ENCODE measurements at regions of chr7 and their contacts with region 1.

Region 1: DNA sequence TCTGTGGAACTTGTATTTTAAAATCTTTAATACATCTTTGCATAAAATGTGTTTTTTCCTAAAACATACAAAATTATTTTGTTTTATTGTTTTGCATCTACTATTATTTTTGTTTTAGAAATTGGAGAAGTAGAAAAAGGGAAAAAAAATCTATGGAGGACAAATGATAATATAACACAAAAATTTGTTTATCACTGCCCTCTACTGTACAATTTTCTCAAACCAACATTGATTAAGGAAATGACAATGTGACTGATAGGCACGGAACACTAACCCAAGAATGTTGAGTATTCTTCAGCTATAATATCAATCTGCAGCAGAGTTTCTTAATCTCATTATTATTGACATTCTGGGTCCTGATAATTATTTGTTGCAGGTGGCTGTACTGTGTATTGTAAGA is 9.5 kb upstream of the ING3 start:
- DNase-seq: no peak
- H3K4me3 ChIP-seq: no peak overlapping the region
- H3K27ac ChIP-seq: no peak overlapping the region
- H3K4me1 ChIP-seq: no peaks in the 10 kb centered on the region
- H3K27me3 ChIP-seq: no peaks in the 10 kb centered on the region
- CTCF ChIP-seq: peak in 1 of 3 donors; percentile 24
- POLR2A ChIP-seq: no peak

Region 2: GRCh38 chr7:120272261-120272660 is 668.8 kb before region 1 on chr7:
- intact Hi-C with region 1: loop called (anchors 5 kb)
- DNase-seq: no peak
- H3K4me3 ChIP-seq: peak overlapping the region; percentile 48 to 69 (median 58)
- H3K27ac ChIP-seq: no peak overlapping the region
- H3K4me1 ChIP-seq: no peaks in the 10 kb centered on the region
- H3K27me3 ChIP-seq: no peaks in the 10 kb centered on the region
- CTCF ChIP-seq: peak; percentile 35 to 48 (median 36)
- POLR2A ChIP-seq: no peak

Region 3: DNA sequence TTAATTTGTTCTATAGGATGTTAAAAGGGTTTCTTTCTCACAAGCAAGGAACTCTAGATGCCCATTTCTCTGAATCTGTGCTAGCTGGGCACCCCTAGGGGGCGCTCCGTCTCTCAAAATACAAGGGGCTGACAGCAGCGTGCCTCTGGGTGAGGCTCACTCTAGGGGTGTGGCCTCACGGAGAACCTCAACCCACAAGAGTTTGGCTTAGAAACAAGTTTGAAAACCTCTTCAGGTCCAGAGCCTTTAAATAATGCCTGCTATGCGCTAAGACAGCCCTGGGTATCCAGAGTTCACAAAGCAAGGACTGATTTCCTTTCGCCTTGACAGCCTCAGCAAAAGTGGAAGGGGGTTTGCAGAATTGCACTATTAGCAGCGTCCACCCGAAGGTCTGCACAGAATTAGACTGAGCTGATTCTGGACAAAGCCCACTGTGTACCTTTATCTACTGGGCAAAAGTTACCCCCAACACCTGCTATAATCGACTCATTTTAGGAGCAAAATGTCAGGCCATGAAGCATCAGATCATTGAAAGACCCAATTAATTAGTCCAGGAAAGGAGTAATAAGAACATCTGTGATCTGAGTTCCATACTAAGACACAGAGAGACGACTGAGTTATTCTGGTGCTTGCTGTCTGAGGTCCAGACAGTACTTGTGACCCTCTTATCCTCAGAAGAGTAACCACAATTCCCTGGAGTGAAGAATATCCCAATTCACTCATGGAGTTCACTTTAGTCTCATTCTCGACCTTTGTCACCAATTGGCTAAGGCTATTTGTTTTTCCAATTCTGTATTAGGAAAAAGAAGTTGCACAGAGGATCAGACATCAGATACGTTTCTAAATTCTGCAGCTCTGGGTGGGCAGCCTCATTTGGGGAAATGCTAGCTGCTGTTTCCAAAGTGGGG is 46.9 kb after region 1 on chr7:
- intact Hi-C with region 1: loop called (anchors 2 kb)
- DNase-seq: peak; percentile 78 to 80
- H3K4me3 ChIP-seq: peak overlapping the region; percentile 51 to 65 (median 53)
- H3K27ac ChIP-seq: peak overlapping the region; percentile 77 to 90
- H3K4me1 ChIP-seq: no peaks in the 10 kb centered on the region
- H3K27me3 ChIP-seq: peaks cover 0 to 7% of the 10 kb centered on the region in 2 donors
- CTCF ChIP-seq: peak; percentile 64 to 89 (median 74)
- POLR2A ChIP-seq: no peak

Region 4: DNA sequence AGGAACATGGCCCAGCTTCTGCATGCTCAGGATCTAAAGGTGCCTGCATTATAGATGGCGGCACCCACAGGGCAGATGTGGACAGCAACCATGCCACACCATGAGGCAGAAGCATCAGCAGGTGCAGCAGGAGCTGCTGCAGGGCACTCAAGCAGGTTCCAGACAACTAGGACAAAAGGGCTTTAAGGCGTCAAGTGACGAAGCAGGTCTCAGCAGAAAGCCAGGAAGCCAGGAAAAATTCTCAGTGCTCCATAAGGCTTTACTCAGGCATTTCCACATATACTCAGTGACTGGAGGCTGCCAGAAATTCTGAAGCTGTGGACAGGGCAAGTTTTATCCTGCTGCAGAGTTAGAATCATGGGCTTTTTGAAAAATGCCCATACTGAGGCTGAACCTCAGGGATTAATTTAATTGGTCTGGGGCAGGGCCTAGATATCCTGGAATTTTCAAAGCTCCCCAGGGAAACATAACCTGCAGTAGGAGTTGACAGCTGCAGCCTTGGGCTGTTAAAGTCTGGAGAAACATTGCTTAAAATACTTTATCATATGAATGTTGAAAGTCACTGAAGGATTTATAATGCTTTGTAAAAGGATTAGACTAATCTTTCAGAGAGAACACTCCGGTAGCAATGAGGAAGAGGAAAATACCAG is 1829.7 kb after region 1 on chr7:
- intact Hi-C with region 1: no loop called
- DNase-seq: no peak
- H3K4me3 ChIP-seq: no peak overlapping the region
- H3K27ac ChIP-seq: no peak overlapping the region
- H3K4me1 ChIP-seq: no peaks in the 10 kb centered on the region
- H3K27me3 ChIP-seq: no peaks in the 10 kb centered on the region
- CTCF ChIP-seq: no peak
- POLR2A ChIP-seq: no peak